K562 (cell line): ENCODE measurements at regions of chr3 and their contacts with region 1.

Region 1: DNA sequence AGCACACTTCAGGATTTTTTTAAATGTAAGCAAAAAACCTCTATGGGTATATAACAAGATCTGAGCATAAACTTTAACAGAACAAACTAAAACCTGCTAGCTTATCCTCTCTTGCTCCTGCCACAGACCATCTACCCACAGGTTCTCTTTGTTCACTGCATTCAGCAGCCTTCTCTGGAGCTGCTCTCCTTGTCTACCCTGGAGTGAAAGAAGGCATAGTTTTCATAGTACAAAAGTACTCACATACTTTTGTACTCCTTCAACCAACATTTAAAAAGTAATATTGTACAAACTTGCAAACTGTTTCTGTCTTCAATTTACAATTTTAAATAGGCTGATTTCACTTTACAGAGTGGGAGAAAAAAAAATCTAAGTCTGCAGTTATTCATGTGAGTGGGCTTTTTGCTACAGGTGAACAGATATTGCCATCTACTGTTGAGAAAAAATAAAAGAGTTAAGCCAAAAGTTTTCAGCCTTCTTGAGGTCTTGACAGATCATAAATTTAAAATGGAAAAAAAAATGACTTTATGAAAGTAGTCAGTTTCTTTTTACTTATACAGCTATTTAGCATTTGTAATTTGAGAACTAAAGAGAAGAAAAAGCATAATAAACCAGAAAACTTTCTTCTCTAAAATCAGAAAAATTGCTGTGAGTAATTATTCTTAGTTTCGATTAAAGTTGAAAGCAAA is 20.4 kb downstream of the TERC start:
- DNase-seq: no peak
- ATAC-seq: peak; percentile 67
- H3K4me3 ChIP-seq: no peak overlapping the region
- H3K27ac ChIP-seq: no peak overlapping the region
- H3K4me1 ChIP-seq: peaks cover 2 to 3% of the 10 kb centered on the region in 2 experiments; a peak in 2 of 5 replicates
- H3K27me3 ChIP-seq: peaks cover 3 to 8% of the 10 kb centered on the region in 2 experiments; a peak in 3 of 5 replicates
- CTCF ChIP-seq: peak in 2 of 3 experiments; percentile 35 to 68; a peak in 4 of 6 replicates
- EP300 ChIP-seq: no peak
- POLR2A ChIP-seq: no peak
- RAD21 ChIP-seq: peak; percentile 77 to 81

Region 2: DNA sequence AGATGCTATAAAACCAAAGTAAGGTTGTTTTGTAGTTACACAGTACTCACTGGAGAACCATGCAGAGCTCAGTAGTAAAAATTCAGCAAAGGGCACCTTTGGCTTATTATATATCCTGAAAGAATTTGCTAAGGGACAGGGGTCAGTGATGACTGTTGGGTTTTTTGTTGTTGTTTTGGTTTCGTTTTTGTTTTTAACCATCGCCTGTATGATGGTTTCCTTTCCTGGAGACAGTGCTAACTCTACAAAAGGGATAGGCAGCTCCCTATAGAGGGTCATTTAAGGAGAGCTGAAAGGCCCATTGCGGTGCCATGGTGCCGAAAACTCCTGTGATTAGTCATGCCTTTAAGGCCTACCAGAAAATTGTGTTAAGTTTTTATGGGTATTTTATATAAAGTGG is 1530.6 kb before region 1 on chr3:
- CTCF ChIA-PET with region 1: no interaction called
- POLR2A ChIA-PET with region 1: no interaction called
- in situ Hi-C with region 1: no loop called
- intact Hi-C with region 1: loop called (anchors 10 kb)
- DNase-seq: no peak
- ATAC-seq: no peak; the same call in 2 of the 3 replicates
- H3K4me3 ChIP-seq: no peak overlapping the region
- H3K27ac ChIP-seq: no peak overlapping the region
- H3K4me1 ChIP-seq: no peaks in the 10 kb centered on the region
- H3K27me3 ChIP-seq: no peaks in the 10 kb centered on the region; a peak in 1 of 5 replicates
- CTCF ChIP-seq: no peak
- EP300 ChIP-seq: no peak
- POLR2A ChIP-seq: no peak
- RAD21 ChIP-seq: no peak

Region 3: GRCh38 chr3:168865022-168865551 is 879.4 kb before region 1 on chr3:
- CTCF ChIA-PET with region 1: no interaction called
- POLR2A ChIA-PET with region 1: no interaction called
- in situ Hi-C with region 1: no loop called
- intact Hi-C with region 1: loop called (anchors 5 kb)
- DNase-seq: peak in 3 of 4 experiments; percentile 3 to 14 (median 8)
- ATAC-seq: no peak
- H3K4me3 ChIP-seq: no peak overlapping the region
- H3K27ac ChIP-seq: no peak overlapping the region
- H3K4me1 ChIP-seq: no peaks in the 10 kb centered on the region
- H3K27me3 ChIP-seq: no peaks in the 10 kb centered on the region
- CTCF ChIP-seq: peak in 2 of 3 experiments; percentile 34 to 52; a peak in 2 of 6 replicates
- EP300 ChIP-seq: no peak
- POLR2A ChIP-seq: no peak
- RAD21 ChIP-seq: peak; percentile 22 to 50; a peak in 3 of 4 replicates

Region 4: DNA sequence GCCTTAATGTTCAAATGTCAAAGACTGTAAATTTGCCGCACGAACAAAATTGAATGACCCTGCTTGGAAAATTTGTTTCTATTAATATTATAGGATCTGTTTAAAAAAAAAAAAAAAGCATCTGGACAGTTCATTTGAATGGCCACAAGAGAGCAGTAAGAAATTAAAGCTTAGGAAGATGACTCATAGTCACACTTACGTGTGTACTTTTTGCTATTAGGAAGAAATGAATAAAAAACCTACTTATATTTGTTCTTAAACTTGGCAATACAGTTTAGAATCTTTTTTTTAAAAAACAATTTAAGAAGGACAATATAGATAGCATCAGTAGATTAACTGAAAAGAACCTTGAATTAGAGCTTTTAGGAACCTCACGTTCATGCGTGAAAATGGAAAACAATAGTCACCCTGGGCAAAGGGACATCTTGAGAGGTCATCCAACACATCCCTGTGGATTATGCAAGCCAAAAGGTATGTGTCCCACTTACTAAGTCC is 702.8 kb before region 1 on chr3:
- CTCF ChIA-PET with region 1: no interaction called
- POLR2A ChIA-PET with region 1: no interaction called
- in situ Hi-C with region 1: no loop called
- intact Hi-C with region 1: loop called (anchors 10 kb)
- DNase-seq: peak in 3 of 4 experiments; percentile 11 to 20 (median 13)
- ATAC-seq: peak; percentile 81
- H3K4me3 ChIP-seq: no peak overlapping the region
- H3K27ac ChIP-seq: no peak overlapping the region
- H3K4me1 ChIP-seq: no peaks in the 10 kb centered on the region
- H3K27me3 ChIP-seq: no peaks in the 10 kb centered on the region
- CTCF ChIP-seq: peak; percentile 18 to 61 (median 22); a peak in 3 of 6 replicates
- EP300 ChIP-seq: no peak
- POLR2A ChIP-seq: no peak
- RAD21 ChIP-seq: peak; percentile 55 to 56

Region 5: GRCh38 chr3:169149349-169149890 is 595.1 kb before region 1 on chr3:
- CTCF ChIA-PET with region 1: no interaction called
- POLR2A ChIA-PET with region 1: no interaction called
- in situ Hi-C with region 1: loop called (anchors 10 kb)
- intact Hi-C with region 1: loop called (anchors 2 kb)
- DNase-seq: peak; percentile 73 to 89 (median 78)
- ATAC-seq: peak; percentile 65
- H3K4me3 ChIP-seq: peak overlapping the region; percentile 23
- H3K27ac ChIP-seq: peak overlapping the region; percentile 89
- H3K4me1 ChIP-seq: peaks cover 6 to 15% of the 10 kb centered on the region in 2 experiments; a peak in 4 of 5 replicates
- H3K27me3 ChIP-seq: no peaks in the 10 kb centered on the region; a peak in 1 of 5 replicates
- CTCF ChIP-seq: peak; percentile 82 to 92 (median 90)
- EP300 ChIP-seq: peak; percentile 23; the same call in 1 of the 2 replicates
- POLR2A ChIP-seq: no peak; the same call in 1 of the 2 replicates
- RAD21 ChIP-seq: peak; percentile 80 to 81

Region 6: DNA sequence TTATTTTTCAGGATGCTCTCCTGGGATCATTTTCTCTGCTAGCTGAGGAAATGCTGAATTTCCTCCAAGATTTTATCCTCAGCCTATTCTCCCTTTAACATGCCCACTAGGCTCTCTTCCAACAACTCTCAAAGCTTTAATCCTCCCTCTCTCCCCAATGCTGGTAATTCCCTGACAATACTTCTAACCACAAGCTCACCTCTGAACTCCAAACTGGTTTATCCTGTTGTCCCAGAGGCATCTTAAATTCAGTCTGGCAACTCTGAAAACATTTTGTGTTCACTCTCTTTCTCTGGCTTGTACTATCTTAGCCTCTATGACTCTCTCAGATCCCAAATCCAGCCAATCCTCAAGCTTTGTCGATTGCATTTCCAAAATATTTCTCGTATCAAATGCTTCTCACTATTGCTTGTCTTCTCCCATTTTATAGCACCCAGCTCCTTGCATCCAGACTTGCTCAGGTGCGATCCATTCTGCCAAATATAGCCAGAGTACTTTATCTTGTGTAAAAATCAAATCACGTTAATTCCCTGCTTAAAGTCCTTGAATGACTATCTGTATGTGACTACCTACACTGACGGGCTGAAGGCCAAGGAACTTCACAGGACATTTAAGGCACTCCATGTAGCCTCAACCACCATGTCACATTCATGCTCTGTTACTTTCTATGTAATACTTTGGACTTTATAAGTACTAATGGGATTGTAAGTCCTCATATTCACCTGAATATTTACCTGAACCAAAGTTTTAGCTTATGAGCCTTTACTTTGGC is 571.1 kb before region 1 on chr3:
- CTCF ChIA-PET with region 1: no interaction called
- POLR2A ChIA-PET with region 1: no interaction called
- in situ Hi-C with region 1: no loop called
- intact Hi-C with region 1: no loop called
- DNase-seq: no peak
- ATAC-seq: no peak
- H3K4me3 ChIP-seq: no peak overlapping the region
- H3K27ac ChIP-seq: no peak overlapping the region
- H3K4me1 ChIP-seq: no peaks in the 10 kb centered on the region
- H3K27me3 ChIP-seq: no peaks in the 10 kb centered on the region; a peak in 2 of 5 replicates
- CTCF ChIP-seq: no peak
- EP300 ChIP-seq: no peak
- POLR2A ChIP-seq: no peak
- RAD21 ChIP-seq: no peak

Region 7: GRCh38 chr3:169218314-169218983 is 526.1 kb before region 1 on chr3:
- CTCF ChIA-PET with region 1: no interaction called
- POLR2A ChIA-PET with region 1: no interaction called
- in situ Hi-C with region 1: no loop called
- intact Hi-C with region 1: loop called (anchors 10 kb)
- DNase-seq: peak in 2 of 4 experiments; percentile 22 to 25
- ATAC-seq: peak; percentile 86
- H3K4me3 ChIP-seq: no peak overlapping the region
- H3K27ac ChIP-seq: no peak overlapping the region
- H3K4me1 ChIP-seq: no peaks in the 10 kb centered on the region
- H3K27me3 ChIP-seq: no peaks in the 10 kb centered on the region
- CTCF ChIP-seq: peak; percentile 56 to 57 (median 56); a peak in 5 of 6 replicates
- EP300 ChIP-seq: no peak
- POLR2A ChIP-seq: no peak
- RAD21 ChIP-seq: peak; percentile 33 to 59

Region 8: GRCh38 chr3:169668957-169669681 is 75.4 kb before region 1 on chr3:
- CTCF ChIA-PET with region 1: no interaction called
- POLR2A ChIA-PET with region 1: no interaction called
- in situ Hi-C with region 1: no loop called
- intact Hi-C with region 1: loop called (anchors 5 kb)
- DNase-seq: peak; percentile 43 to 75 (median 61)
- ATAC-seq: peak; percentile 100
- H3K4me3 ChIP-seq: peak overlapping the region; percentile 25; the same call in 1 of the 2 replicates
- H3K27ac ChIP-seq: no peak overlapping the region
- H3K4me1 ChIP-seq: peaks cover 0 to 15% of the 10 kb centered on the region in 2 experiments; a peak in 3 of 5 replicates
- H3K27me3 ChIP-seq: peaks cover 38 to 42% of the 10 kb centered on the region in 2 experiments
- CTCF ChIP-seq: peak; percentile 77 to 90 (median 82)
- EP300 ChIP-seq: no peak
- POLR2A ChIP-seq: no peak
- RAD21 ChIP-seq: peak; percentile 88 to 89

Region 9: DNA sequence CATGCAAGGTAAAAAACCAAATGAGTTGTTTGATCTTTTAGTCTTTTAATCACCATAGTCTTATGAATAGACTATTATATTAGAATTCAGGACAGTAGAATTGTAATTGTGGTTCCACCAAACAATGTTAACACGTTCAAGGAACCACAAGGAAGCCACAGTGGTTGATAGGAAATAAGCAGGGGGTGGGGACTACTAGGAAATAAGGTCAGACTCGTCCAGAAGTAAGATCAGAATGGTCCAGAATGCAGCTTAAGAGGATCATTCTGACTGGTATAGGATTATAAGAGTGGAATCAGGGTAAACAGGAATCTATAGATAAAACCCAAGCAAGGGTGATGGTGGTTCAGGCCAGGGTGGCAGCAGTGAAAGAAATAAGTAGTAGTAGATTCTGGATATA is 36.2 kb after region 1 on chr3:
- CTCF ChIA-PET with region 1: no interaction called
- POLR2A ChIA-PET with region 1: no interaction called
- in situ Hi-C with region 1: no loop called
- intact Hi-C with region 1: no loop called
- DNase-seq: no peak
- ATAC-seq: peak; percentile 69
- H3K4me3 ChIP-seq: no peak overlapping the region
- H3K27ac ChIP-seq: no peak overlapping the region
- H3K4me1 ChIP-seq: peaks cover 0 to 13% of the 10 kb centered on the region in 2 experiments; a peak in 3 of 5 replicates
- H3K27me3 ChIP-seq: no peaks in the 10 kb centered on the region
- CTCF ChIP-seq: no peak
- EP300 ChIP-seq: no peak
- POLR2A ChIP-seq: no peak
- RAD21 ChIP-seq: no peak